Common myeloid progenitor, CD34-positive (primary cell): ENCODE measurements at regions of chr15 and their contacts with region 1.

Region 1: DNA sequence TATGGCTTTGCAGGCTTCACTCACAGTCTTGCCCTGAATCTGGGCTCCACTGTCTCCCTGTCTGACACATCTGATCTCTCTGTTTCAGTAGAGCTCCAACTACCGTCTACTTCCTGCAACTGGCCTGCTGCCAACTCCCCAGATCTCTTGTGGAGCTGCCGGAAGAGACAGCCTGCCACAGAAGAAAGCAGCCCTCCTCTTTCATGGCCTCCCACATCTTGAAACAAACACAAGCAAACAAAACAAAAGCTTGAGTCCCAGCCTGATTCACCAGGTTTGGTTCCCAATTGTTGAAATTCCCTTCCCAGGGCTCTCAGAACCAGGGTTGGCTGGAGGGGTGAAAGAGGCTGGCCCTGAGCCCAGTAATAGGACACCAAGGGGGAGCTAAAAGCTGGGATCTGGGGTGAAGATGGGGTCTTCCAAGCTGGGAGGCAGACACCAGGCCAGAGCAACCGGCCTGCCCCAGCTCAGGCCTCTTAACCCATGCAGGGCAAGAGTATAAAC is 55.3 kb upstream of the CA12 start:
- DNase-seq: peak; percentile 73 to 91 (median 90)
- H3K4me3 ChIP-seq: peak overlapping the region in 2 of 7 experiments; percentile 26 to 27
- H3K27ac ChIP-seq: peak overlapping the region; percentile 47 to 52
- H3K4me1 ChIP-seq: peaks cover 0 to 26% (median 16%) of the 10 kb centered on the region in 4 experiments
- H3K27me3 ChIP-seq: no peaks in the 10 kb centered on the region

Region 2: GRCh38 chr15:63288778-63289378 is 148.0 kb before region 1 on chr15:
- CTCF ChIA-PET with region 1: interaction called, 10 read pairs
- POLR2A ChIA-PET with region 1: no interaction called
- DNase-seq: peak; percentile 57 to 80 (median 73)
- H3K4me3 ChIP-seq: no peak overlapping the region
- H3K27ac ChIP-seq: no peak overlapping the region
- H3K4me1 ChIP-seq: peaks cover 0 to 10% (median 0%) of the 10 kb centered on the region in 4 experiments
- H3K27me3 ChIP-seq: no peaks in the 10 kb centered on the region

Region 3: DNA sequence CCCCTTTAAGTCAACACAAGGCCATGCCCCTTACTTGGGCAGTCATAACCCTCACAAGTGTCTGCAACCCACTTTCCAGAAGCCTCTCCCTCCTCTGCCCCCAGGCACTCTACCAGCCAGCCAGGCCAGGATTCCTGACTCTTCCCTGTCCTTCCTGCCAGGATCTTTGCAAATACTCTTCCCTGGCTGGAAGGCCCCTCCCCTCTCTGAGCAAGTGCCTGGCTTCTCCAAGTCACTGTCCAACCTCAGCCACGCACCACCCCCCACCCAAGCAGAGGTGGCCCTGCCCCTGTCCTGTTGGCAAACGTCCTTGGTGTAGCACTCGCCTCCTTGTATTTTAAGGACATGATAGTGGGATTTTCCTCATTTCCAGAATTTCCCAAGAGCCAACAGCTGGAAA is 12.8 kb after region 1 on chr15:
- CTCF ChIA-PET with region 1: interaction called, 21 read pairs
- POLR2A ChIA-PET with region 1: no interaction called
- DNase-seq: no peak
- H3K4me3 ChIP-seq: no peak overlapping the region
- H3K27ac ChIP-seq: no peak overlapping the region
- H3K4me1 ChIP-seq: peaks cover 4 to 54% (median 37%) of the 10 kb centered on the region in 4 experiments
- H3K27me3 ChIP-seq: no peaks in the 10 kb centered on the region